ENCODE measurements at regions of chr4 and their contacts with region 1.

Region 1: GRCh38 chr4:94406668-94407437 is 44.9 kb upstream of the PDLIM5 start:
- DNase-seq: peak in 2 of 3 donors; percentile 39 to 94
- ATAC-seq: peak; percentile 79
- H3K4me3 ChIP-seq: no peak overlapping the region
- H3K4me1 ChIP-seq: no peaks in the 10 kb centered on the region
- CTCF ChIP-seq: peak; percentile 77

Region 2: GRCh38 chr4:93912146-93912545 is 494.7 kb before region 1 on chr4:
- intact Hi-C with region 1: no loop called
- DNase-seq: no peak
- ATAC-seq: no peak
- H3K4me3 ChIP-seq: no peak overlapping the region
- H3K4me1 ChIP-seq: no peaks in the 10 kb centered on the region
- CTCF ChIP-seq: no peak

Region 3: GRCh38 chr4:94354474-94354896 is 52.4 kb before region 1 on chr4:
- intact Hi-C with region 1: no loop called
- DNase-seq: no peak
- ATAC-seq: peak; percentile 42
- H3K4me3 ChIP-seq: no peak overlapping the region
- H3K4me1 ChIP-seq: no peaks in the 10 kb centered on the region
- CTCF ChIP-seq: no peak

Region 4: DNA sequence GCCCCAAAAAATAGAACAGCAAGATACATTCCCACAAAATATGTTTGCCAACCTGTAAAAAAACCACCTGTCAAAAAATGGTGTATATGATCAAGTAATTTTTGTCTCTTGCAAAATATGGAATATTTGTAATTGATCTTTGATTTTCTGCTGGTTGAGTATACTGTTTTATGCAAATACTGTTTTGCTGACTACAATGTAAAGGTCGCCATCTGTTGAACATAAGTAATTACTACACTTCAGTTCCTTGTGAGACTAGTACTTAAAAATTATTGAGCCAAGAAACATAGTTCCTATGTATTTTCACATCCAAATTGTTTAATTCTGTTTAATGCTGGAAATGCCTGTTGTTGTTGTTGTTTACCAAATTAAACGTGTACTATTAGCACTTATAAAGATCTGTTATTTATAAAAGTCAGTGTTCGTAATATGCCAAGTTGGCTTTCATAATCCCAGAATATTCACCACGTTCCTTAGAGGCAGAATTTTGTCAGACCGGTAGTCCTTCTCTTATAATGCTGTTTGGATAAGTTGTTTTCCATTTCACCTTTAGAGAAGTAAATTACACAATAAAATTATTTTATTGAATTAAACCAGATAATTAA is 189.1 kb after region 1 on chr4:
- intact Hi-C with region 1: loop called (anchors 2 to 5 kb)
- DNase-seq: no peak
- ATAC-seq: peak; percentile 69
- H3K4me3 ChIP-seq: no peak overlapping the region
- H3K4me1 ChIP-seq: no peaks in the 10 kb centered on the region
- CTCF ChIP-seq: no peak